Heart right ventricle (tissue), 16 donors: ENCODE measurements at regions of chr1 and their contacts with region 1.

Region 1: GRCh38 chr1:180623579-180624347 is 8.1 kb upstream of the XPR1 start:
- DNase-seq: no peak
- ATAC-seq: no peak
- H3K4me3 ChIP-seq: no peak overlapping the region
- H3K27ac ChIP-seq: no peak overlapping the region
- H3K4me1 ChIP-seq: no peaks in the 10 kb centered on the region
- H3K27me3 ChIP-seq: no peaks in the 10 kb centered on the region
- CTCF ChIP-seq: peak in 5 of 9 donors; percentile 15 to 52 (median 35)

Region 2: DNA sequence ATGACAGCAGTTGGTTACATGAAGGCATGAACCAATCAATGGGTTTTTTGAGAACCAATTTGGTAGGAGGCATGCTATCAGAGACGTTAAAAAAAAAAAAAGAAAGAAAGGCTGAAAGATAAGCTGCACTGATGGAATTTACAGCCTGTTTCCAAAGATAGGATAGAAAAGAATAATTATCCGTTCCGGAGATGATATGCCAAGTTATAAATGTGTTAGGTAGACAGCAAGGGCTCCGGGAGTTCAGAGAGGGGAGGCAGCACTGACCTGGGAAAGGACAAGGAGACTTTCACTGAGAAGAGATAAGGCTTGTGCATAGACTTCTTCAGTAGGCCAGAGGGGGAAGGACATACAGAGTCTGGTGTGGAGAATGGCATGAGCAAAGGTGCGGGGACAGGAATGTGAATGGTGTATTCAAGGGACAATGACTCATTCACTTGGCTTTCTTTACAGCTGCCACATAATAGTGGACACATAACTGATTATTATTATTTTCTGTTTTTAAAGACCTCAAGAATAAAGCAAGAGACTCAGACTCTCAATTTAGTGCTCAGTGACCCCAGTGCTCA is 96.6 kb before region 1 on chr1:
- intact Hi-C with region 1: loop called in 1 of 10 experiments (anchors 5 kb)
- DNase-seq: no peak
- ATAC-seq: peak in 4 of 8 donors; percentile 27 to 41 (median 36)
- H3K4me3 ChIP-seq: no peak overlapping the region
- H3K27ac ChIP-seq: peak overlapping the region in 1 of 10 donors; percentile 22
- H3K4me1 ChIP-seq: peaks cover 0 to 57% (median 21%) of the 10 kb centered on the region in 9 donors
- H3K27me3 ChIP-seq: no peaks in the 10 kb centered on the region
- CTCF ChIP-seq: no peak

Region 3: DNA sequence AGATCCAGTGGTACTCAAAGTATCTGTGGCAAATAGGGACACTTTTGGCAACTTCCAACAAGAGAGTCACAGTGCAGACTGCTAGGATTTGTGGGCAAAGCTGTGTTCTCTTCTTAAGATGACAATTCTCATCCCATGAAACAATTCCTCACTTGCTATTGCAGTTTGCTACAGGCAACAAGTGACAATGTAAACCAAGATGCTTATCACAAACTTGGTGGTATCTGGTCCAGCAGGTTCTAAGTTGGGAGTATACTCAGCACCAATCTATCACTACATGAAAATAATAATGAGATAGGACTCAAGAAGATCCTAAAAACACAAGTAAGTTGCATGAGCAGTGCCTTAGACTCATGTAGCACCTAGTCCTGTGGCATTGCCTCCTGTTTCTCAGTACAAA is 68.4 kb before region 1 on chr1:
- intact Hi-C with region 1: no loop called
- DNase-seq: no peak
- ATAC-seq: no peak
- H3K4me3 ChIP-seq: no peak overlapping the region
- H3K27ac ChIP-seq: no peak overlapping the region
- H3K4me1 ChIP-seq: peaks cover 0 to 25% (median 6%) of the 10 kb centered on the region in 9 donors
- H3K27me3 ChIP-seq: no peaks in the 10 kb centered on the region
- CTCF ChIP-seq: no peak

Region 4: DNA sequence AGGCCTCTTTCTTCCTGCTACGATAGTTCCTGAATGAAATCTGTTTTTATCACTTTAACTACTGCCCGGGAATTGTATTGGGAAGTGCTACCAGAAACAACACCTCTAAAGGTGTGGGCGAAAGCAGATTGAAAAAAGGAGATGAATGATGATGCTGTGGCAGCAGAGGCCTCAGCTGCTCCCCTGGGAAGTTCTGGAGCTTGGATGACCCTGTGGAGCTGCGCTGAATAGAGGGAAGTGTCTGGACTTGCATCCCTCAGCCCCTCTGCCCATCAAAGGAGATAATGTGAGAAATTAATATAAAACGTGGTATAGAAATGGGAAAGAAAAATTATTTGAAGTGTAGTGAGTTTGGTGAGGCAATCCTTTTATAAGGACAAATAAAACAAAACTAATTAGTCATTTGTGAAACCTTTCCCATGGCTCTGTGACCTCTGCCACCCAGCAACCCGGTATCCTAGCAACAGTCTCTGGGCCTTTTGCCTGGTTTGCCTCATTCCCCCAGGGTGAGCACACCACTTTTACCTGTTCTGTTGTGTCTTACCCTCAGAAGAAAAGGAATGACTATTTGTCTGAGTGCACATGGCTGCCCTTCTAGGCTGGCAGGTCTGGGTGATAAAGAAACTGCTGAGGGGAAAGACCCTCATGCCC is 43.7 kb before region 1 on chr1:
- intact Hi-C with region 1: loop called in 1 of 10 experiments (anchors 10 kb)
- DNase-seq: no peak
- ATAC-seq: no peak
- H3K4me3 ChIP-seq: no peak overlapping the region
- H3K27ac ChIP-seq: no peak overlapping the region
- H3K4me1 ChIP-seq: peaks cover 0 to 11% (median 4%) of the 10 kb centered on the region in 9 donors
- H3K27me3 ChIP-seq: no peaks in the 10 kb centered on the region
- CTCF ChIP-seq: no peak

Region 5: GRCh38 chr1:180662709-180663108 is 38.9 kb after region 1 on chr1:
- intact Hi-C with region 1: no loop called
- DNase-seq: no peak
- ATAC-seq: no peak
- H3K4me3 ChIP-seq: no peak overlapping the region
- H3K27ac ChIP-seq: no peak overlapping the region
- H3K4me1 ChIP-seq: peaks cover 0 to 13% (median 4%) of the 10 kb centered on the region in 9 donors
- H3K27me3 ChIP-seq: no peaks in the 10 kb centered on the region
- CTCF ChIP-seq: no peak

Region 6: DNA sequence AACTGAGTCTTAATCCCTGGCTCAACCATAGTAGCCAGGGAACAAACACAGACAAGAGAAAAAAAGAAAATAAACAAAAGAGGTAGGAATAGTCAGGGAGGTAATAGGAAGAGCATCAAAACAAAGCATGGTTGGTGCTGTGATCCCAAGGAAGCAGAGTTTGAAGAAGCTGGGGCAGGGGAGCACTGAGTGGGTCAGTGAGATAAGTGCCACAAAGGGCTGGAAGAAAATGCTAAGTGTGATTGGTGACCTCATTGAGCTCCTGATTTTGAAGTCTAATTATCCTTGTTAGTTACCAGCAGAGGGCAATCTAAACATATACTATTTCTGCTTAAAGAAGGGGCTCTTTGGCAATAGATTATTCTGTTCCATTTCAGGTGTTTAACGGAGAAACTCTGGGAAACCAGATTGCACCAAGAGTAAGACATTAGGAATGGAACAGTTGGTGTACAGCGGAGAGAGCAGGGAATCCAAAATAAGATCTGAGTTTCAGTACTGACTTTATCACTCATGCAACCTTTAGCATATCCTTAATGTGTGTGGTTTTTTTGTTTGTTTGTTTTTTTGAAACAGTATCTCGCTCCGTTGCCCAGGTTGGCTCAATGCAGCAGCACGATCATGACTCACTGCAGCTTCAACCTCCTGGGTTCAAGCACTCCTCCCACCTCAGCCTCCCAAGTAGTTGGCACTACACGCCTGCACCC is 258.2 kb after region 1 on chr1:
- intact Hi-C with region 1: no loop called
- DNase-seq: no peak
- ATAC-seq: peak; percentile 47 to 69 (median 59)
- H3K4me3 ChIP-seq: no peak overlapping the region
- H3K27ac ChIP-seq: peak overlapping the region in 1 of 10 donors; percentile 2
- H3K4me1 ChIP-seq: peaks cover 0 to 19% (median 4%) of the 10 kb centered on the region in 9 donors
- H3K27me3 ChIP-seq: no peaks in the 10 kb centered on the region
- CTCF ChIP-seq: peak in 8 of 9 donors; percentile 36 to 70 (median 54)